CD4-positive, alpha-beta T cell (primary cell): ENCODE measurements at regions of chr6 and their contacts with region 1.

Region 1: DNA sequence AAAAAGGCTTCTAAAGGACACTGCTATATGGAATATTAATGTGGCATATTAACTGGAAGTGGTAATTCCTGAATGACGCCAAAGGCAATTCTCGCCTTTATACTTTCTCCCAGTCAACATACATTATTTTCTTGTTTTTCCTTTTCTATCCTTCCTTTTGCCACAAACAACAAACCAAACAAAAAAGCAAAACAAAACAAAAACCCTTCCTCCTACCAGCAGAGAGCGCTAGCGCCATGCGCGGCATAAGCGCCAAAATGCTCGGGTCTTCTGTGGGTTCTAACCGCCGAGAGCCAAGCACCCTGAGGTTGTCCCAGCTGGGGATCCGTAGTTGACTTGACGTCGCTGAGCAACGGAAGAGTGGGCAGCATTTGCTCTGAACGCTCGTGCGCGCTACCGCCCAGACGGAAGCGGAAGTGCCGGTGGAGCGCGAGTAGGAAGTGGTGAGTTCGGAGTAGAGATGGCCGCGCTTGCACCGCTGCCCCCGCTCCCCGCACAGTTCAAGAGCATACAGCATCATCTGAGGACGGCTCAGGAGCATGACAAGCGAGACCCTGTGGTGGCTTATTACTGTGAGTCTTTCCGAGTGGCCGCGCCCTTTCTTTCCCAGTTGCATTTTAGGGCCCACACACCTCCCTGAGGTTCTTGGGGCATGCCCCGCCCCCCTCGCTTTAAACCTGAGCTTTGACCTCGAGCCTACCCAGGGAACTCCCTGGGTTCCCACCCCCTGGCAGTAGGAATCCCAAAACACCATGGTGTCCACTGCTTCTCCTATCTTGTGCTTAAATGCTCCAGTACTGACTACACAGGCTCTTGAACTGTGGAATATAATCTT is at the starts of genes NMBR and VTA1:
- DNase-seq: peak; percentile 89 to 99 (median 94)
- ATAC-seq: peak; percentile 94
- H3K4me3 ChIP-seq: peak within 1 kb of the TSS; percentile 78
- H3K4me3 Mint-ChIP-seq: peak within 1 kb of the TSS; percentile 97
- H3K27ac ChIP-seq: peak within 1 kb of the TSS; percentile 56 to 68
- H3K27ac Mint-ChIP-seq: peak within 1 kb of the TSS; percentile 89
- H3K4me1 ChIP-seq: peaks cover 8% of the 10 kb centered on the region
- H3K4me1 Mint-ChIP-seq: peaks cover 72% of the 10 kb centered on the region
- H3K27me3 ChIP-seq: no peaks in the 10 kb centered on the region
- H3K27me3 Mint-ChIP-seq: no peaks in the 10 kb centered on the region
- CTCF ChIP-seq: peak; percentile 94
- total RNA-seq, gene NMBR: not detected
- total RNA-seq, gene VTA1: 13.5 to 18.0 TPM

Region 2: DNA sequence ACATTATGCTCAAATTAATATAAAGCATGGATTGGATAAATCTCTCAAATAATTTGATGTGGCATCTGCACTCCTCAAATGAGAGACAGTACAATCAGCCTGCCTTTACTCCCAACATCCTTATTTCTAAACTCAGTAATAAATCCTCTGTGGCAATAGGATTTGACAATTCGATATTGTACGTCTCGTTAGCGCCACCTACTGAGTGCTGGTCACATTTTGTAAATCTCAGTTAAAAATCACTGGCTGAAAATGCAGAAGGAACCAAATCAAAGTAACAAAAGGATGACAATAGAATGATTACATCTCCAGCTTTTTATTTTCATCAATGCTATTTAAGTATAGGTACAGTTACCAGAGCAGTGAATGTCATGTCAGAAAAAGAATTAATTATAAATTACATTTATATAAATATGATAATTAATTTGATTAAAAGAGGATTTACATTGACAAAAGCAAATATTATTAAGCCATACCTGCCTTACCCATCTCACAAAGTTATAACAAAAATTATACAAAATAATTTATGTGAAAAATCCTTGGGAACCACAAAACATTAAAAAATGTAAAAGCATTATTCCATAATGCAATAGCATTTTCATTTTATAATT is 34.5 kb before region 1 on chr6:
- CTCF ChIA-PET with region 1: no interaction called
- POLR2A ChIA-PET with region 1: no interaction called
- intact Hi-C with region 1: no loop called
- DNase-seq: peak; percentile 33 to 74 (median 56)
- ATAC-seq: no peak
- H3K4me3 ChIP-seq: no peak overlapping the region
- H3K4me3 Mint-ChIP-seq: no peak overlapping the region
- H3K27ac ChIP-seq: no peak overlapping the region
- H3K27ac Mint-ChIP-seq: no peak overlapping the region
- H3K4me1 ChIP-seq: no peaks in the 10 kb centered on the region
- H3K4me1 Mint-ChIP-seq: no peaks in the 10 kb centered on the region
- H3K27me3 ChIP-seq: no peaks in the 10 kb centered on the region
- H3K27me3 Mint-ChIP-seq: peaks cover 8% of the 10 kb centered on the region
- CTCF ChIP-seq: peak; percentile 93

Region 3: DNA sequence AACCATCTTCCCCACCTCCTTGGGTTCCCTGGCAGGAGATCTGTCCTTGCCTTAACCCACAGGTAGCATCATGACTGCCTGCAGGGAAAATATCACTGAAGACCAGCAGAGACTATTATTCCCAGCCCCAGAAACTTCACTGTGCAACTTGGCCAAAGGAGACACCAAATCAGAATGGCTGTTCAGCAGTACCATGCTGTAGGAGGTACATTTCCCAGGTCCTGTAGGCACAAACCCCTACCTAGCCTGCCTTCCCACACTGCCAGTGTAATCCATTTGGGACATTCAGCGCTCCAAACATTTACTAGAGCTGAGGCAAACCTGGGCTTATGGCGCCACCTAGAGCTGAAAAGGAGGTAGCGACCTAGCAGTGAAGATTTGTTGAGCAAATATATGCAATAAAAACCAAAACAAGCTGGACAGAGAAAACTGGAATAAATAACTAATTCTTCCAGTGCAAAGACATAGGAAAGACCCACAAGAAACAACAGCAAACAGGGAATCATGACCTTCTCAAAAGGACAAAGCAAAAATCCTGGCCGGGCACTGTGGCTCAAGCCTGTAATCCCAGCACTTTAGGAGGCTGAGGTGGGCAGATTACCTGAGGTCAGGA is 60.3 kb after region 1 on chr6:
- CTCF ChIA-PET with region 1: interaction called, 16 read pairs
- POLR2A ChIA-PET with region 1: no interaction called
- intact Hi-C with region 1: loop called (anchors 1 to 2 kb)
- DNase-seq: peak; percentile 5 to 68 (median 26)
- ATAC-seq: peak; percentile 64
- H3K4me3 ChIP-seq: no peak overlapping the region
- H3K4me3 Mint-ChIP-seq: no peak overlapping the region
- H3K27ac ChIP-seq: no peak overlapping the region
- H3K27ac Mint-ChIP-seq: peak overlapping the region; percentile 1
- H3K4me1 ChIP-seq: no peaks in the 10 kb centered on the region
- H3K4me1 Mint-ChIP-seq: no peaks in the 10 kb centered on the region
- H3K27me3 ChIP-seq: no peaks in the 10 kb centered on the region
- H3K27me3 Mint-ChIP-seq: no peaks in the 10 kb centered on the region
- CTCF ChIP-seq: peak; percentile 84

Region 4: GRCh38 chr6:142474531-142475289 is 327.7 kb after region 1 on chr6:
- CTCF ChIA-PET with region 1: interaction called, 3 read pairs
- POLR2A ChIA-PET with region 1: no interaction called
- intact Hi-C with region 1: loop called in 1 of 2 experiments (anchors 10 kb)
- DNase-seq: peak in 3 of 14 experiments; percentile 34 to 74 (median 64)
- ATAC-seq: peak; percentile 62
- H3K4me3 ChIP-seq: no peak overlapping the region
- H3K4me3 Mint-ChIP-seq: no peak overlapping the region
- H3K27ac ChIP-seq: no peak overlapping the region
- H3K27ac Mint-ChIP-seq: no peak overlapping the region
- H3K4me1 ChIP-seq: no peaks in the 10 kb centered on the region
- H3K4me1 Mint-ChIP-seq: peaks cover 6% of the 10 kb centered on the region
- H3K27me3 ChIP-seq: no peaks in the 10 kb centered on the region
- H3K27me3 Mint-ChIP-seq: no peaks in the 10 kb centered on the region
- CTCF ChIP-seq: peak; percentile 94

Region 5: DNA sequence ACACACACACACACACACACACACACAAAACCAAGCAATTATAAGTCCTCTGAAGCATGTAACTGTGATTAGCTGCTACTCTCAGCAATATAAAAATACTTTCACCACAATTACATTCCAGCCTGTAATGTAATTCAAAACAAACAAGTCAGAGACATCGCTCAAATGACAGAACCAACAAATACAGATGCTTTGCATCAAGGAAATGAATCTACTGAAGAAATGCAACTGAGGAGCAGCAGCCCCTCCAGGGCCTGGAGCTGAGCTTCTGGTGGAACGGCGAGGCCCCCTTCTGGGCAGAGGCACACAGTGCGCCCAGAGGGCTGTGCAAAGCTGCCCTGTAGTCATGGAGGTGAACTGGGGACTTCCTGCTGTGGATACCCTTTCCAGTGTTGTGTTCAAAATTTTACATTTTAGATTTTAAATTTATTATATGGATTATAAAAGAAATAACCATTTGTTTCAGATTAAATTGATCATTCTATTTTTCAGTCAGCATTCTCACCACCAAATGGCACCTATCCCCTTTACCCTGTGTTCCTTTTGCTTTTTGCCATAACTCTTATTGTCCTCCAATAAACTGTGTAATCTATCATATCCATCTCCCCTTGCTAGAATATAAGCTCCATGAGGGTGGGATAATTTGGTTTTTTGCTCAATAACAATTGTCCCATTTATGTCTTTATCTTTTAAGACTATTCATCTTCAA is 1280.2 kb after region 1 on chr6:
- CTCF ChIA-PET with region 1: interaction called, 3 read pairs
- POLR2A ChIA-PET with region 1: no interaction called
- intact Hi-C with region 1: loop called in 1 of 2 experiments (anchors 5 kb)
- DNase-seq: peak; percentile 59 to 84 (median 67)
- ATAC-seq: peak; percentile 100
- H3K4me3 ChIP-seq: no peak overlapping the region
- H3K4me3 Mint-ChIP-seq: no peak overlapping the region
- H3K27ac ChIP-seq: no peak overlapping the region
- H3K27ac Mint-ChIP-seq: peak overlapping the region; percentile 14
- H3K4me1 ChIP-seq: no peaks in the 10 kb centered on the region
- H3K4me1 Mint-ChIP-seq: no peaks in the 10 kb centered on the region
- H3K27me3 ChIP-seq: no peaks in the 10 kb centered on the region
- H3K27me3 Mint-ChIP-seq: no peaks in the 10 kb centered on the region
- CTCF ChIP-seq: peak; percentile 88

Region 6: GRCh38 chr6:143842902-143843676 is 1696.0 kb after region 1 on chr6 and contains the start of gene LTV1:
- CTCF ChIA-PET with region 1: no interaction called
- POLR2A ChIA-PET with region 1: no interaction called
- intact Hi-C with region 1: loop called in 1 of 2 experiments (anchors 5 kb)
- DNase-seq: peak; percentile 82 to 96 (median 88)
- ATAC-seq: peak; percentile 95
- H3K4me3 ChIP-seq: peak within 1 kb of the TSS; percentile 90
- H3K4me3 Mint-ChIP-seq: peak within 1 kb of the TSS; percentile 98
- H3K27ac ChIP-seq: peak within 1 kb of the TSS; percentile 88 to 95
- H3K27ac Mint-ChIP-seq: peak within 1 kb of the TSS; percentile 98
- H3K4me1 ChIP-seq: peaks cover 23% of the 10 kb centered on the region
- H3K4me1 Mint-ChIP-seq: peaks cover 36% of the 10 kb centered on the region
- H3K27me3 ChIP-seq: no peaks in the 10 kb centered on the region
- H3K27me3 Mint-ChIP-seq: no peaks in the 10 kb centered on the region
- CTCF ChIP-seq: no peak
- total RNA-seq, gene LTV1: 27.0 to 28.5 TPM

Region 7: GRCh38 chr6:144095331-144096002 is 1948.4 kb after region 1 on chr6 and contains the start of gene SF3B5:
- CTCF ChIA-PET with region 1: no interaction called
- POLR2A ChIA-PET with region 1: no interaction called
- intact Hi-C with region 1: loop called in 1 of 2 experiments (anchors 10 kb)
- DNase-seq: peak; percentile 93 to 100 (median 97)
- ATAC-seq: peak; percentile 96
- H3K4me3 ChIP-seq: peak within 1 kb of the TSS; percentile 83
- H3K4me3 Mint-ChIP-seq: peak within 1 kb of the TSS; percentile 98
- H3K27ac ChIP-seq: peak within 1 kb of the TSS; percentile 84 to 94
- H3K27ac Mint-ChIP-seq: peak within 1 kb of the TSS; percentile 96
- H3K4me1 ChIP-seq: peaks cover 24% of the 10 kb centered on the region
- H3K4me1 Mint-ChIP-seq: peaks cover 30% of the 10 kb centered on the region
- H3K27me3 ChIP-seq: no peaks in the 10 kb centered on the region
- H3K27me3 Mint-ChIP-seq: no peaks in the 10 kb centered on the region
- CTCF ChIP-seq: no peak
- total RNA-seq, gene SF3B5: 113 to 124 TPM